ENCODE measurements at regions of chr18 and their contacts with region 1.

Region 1: GRCh38 chr18:48711651-48712486 is 173.0 kb downstream of the CTIF start:
- DNase-seq: no peak

Region 2: GRCh38 chr18:48136531-48137332 is 575.1 kb before region 1 on chr18:
- intact Hi-C with region 1: no loop called
- DNase-seq: peak; percentile 72

Region 3: DNA sequence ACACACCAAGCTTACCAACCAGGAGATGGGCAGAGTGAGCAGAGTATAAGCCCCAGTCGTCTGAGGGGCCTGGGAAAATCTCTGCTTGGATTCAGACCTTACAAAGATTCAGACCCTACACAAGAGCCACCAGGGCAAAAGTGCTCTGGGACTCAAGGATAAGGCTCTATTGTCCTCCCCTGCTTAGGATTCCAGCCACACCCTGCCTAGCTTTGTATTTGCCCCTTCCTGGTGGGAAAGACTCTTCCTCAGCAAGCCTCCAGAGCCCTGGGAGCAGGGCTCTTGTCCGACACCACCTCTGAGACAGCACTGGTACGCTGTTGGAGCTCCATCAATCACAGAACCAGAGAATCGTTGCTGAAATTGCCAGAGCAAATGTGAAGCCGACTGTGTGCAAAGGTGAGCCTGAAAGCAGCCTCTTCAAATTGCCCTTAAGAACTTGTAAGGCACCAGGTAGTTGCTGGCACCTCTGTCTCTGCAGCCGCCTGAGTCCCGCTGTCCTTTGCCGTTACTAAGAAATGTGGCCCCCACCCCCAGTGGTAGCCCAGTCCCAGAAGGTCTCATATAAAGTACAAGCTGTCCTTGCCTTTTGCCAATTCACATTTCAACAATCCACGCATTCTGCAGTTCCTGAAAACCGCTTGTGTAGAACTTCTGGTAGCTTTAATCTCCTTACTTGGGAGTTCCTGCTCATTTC is 24.4 kb before region 1 on chr18:
- intact Hi-C with region 1: loop called (anchors 2 kb)
- DNase-seq: no peak

Region 4: GRCh38 chr18:48766026-48766425 is 54.2 kb after region 1 on chr18:
- intact Hi-C with region 1: no loop called
- DNase-seq: no peak

Region 5: DNA sequence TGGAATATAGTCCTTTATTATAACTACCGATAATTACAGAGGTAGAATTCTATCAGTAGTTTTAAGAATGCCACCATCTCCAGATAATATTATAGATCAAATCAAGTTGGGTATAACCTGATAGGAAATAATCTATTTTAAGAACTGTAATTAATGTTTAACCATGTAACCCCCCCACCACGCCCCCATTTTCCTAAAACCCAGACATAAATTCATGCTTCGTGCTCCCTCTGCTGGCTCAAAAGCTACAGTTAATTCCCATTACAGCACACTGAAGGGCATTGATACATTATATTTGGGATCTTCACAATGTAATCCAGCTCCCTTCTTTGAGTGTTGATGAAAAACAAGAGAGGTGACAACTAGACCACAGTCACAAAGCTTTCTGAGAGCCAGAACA is 466.9 kb after region 1 on chr18:
- intact Hi-C with region 1: loop called (anchors 10 kb)
- DNase-seq: no peak